ENCODE measurements at regions of chr11 and their contacts with region 1.

Region 1: DNA sequence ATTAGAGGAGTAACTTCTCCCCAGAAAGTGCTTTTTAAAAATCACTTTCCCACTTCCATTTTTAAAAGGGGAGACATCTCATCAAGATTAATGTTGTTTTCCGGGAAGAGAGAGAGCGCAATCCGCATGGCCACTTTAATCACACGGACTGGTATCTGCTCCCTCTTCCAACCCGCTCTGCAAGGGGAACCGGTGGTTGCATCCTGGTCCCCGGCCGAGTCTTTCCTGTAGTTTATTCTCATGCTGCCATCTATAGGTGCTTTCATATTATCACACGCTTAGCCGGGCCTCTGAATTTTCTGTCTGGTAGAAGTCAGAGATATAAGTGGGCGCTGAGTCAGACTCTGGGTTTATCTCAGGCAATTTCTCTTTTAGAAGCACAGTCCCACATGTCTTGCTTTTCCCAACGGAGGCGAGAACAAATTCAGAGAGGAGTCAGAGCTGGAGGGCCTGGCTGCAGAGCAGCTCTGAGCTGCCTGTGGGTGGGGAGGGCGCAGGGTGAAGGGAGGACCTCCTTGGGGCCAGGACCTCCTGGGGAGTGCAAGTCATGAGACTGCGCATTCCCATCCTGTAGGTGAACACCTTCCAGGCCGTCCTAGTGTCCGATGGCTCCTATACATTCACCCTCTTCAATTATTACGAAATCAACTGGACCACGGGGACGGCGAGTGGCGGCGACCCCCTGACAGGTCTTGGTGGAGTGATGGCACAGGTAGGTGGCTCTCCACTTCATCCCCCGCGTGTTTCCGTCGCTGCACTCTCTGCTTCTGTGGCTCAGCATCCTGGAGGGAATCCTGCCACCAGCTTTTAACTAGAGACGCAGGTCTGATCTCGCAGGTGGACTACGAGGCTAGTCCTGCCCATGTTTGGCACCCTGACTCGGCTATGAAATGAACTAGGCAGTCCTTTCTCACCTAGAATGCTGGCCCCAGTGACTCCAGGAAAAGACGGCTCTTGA is 11.7 kb downstream of the TECTA start:
- DNase-seq: peak; percentile 78
- H3K4me3 ChIP-seq: no peak overlapping the region
- H3K27ac ChIP-seq: no peak overlapping the region
- H3K4me1 ChIP-seq: peaks cover 7% of the 10 kb centered on the region
- H3K27me3 ChIP-seq: no peaks in the 10 kb centered on the region
- CTCF ChIP-seq: peak in 2 of 3 experiments; percentile 49 to 54
- POLR2A ChIP-seq: no peak

Region 2: DNA sequence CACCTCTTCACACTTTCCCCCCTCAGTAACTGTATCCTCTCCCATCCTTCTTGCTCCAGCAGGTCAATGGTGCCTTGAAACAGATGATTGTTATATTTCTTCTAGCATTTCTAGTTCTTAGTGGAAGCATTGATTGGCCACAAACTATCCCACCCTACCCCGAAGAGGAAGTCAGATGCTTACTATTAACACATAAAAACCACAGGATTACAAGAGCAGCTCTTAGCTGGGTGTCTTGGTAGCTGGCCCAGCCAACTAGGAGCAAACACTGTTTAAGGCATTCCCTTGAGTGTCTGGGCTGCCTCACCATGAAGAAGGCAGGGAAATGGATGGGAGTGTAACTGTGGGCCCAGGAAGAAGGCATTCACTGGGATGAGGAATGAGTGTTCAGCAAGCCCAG is 424.6 kb before region 1 on chr11:
- intact Hi-C with region 1: loop called (anchors 5 kb)
- DNase-seq: no peak
- H3K4me3 ChIP-seq: no peak overlapping the region
- H3K27ac ChIP-seq: no peak overlapping the region
- H3K4me1 ChIP-seq: no peaks in the 10 kb centered on the region
- H3K27me3 ChIP-seq: no peaks in the 10 kb centered on the region
- CTCF ChIP-seq: no peak
- POLR2A ChIP-seq: no peak

Region 3: DNA sequence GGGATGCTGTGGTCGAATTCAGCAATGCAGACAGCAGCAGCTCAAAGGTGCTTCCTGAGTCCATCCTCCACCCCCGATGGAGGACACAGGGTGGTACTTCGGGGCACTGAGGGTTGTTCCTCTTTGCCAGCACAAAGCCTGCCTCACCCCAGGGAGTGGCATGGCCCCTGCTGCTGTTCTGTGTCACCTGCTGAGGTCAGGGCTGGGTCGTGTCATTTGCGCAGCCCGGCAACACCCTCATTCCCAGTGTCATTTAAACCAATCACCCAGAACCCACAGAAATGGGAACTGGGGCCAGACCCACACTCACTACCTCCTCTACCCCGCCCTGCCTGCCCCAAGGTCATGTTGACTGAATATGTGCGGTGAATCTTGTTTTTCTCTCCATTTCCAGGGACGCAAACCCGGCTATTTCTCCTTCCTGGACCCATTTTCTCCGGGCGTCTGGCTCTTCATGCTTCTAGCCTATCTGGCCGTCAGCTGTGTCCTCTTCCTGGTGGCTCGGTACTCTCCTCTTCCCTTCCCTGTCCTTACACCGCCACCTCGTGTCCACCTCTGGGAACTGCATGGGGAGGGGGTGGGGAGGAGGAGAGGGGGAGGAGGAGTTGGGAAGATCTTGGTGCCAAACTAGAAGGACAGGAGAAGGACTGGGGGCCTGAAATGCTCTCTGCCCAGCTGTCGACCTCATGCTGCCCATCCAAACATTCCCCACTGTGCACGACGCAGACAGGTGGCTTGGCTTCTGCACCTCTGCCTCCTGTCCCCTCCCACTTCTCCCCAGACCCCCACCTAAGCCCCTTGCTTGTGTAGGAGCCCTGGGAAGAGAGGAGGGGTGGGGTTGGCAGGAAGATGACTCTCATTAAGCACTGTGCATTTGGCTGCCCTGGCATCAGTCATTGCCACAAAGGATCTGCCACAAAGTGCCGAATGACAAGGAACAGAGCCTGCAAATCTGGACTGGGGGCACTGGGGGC is 160.0 kb before region 1 on chr11:
- intact Hi-C with region 1: loop called (anchors 10 kb)
- DNase-seq: peak; percentile 82
- H3K4me3 ChIP-seq: no peak overlapping the region
- H3K27ac ChIP-seq: no peak overlapping the region
- H3K4me1 ChIP-seq: peaks cover 4% of the 10 kb centered on the region
- H3K27me3 ChIP-seq: no peaks in the 10 kb centered on the region
- CTCF ChIP-seq: peak; percentile 12 to 79 (median 40)
- POLR2A ChIP-seq: no peak